ENCODE measurements at regions of chr4 and their contacts with region 1.

Region 1: DNA sequence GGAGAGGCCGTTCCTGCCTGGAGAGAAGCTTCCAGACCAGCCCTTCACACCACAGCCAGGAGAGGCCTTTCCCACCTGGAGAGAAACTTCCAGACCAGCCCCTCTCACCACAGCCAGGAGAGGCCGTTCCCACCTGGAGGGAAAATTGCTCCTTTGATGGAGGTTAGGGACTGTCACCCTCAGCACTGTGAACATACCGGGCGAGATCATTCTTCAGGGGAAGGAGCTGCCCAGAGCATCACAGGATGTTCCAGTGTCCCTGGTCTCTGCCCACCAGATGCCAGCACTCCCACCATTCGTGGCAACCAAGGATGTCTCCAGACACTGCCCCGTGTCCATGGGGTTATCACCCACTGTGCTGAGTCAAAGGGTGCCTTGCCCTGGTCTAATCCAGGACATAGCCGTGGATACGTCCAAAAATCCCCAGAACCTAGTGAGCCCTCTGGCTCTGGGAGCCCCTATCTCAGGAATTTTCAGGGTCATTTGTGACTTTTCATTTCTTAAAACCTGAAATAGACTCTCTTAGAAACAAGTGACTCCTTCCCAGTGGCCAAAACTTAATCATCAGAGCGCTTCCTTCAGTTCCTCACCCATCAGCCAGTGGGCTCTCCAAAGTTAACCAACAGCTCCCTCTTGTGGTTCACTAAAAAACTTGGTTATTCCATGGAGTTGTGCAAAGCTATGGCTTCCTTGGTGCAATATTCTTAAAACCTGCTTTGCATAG is 80.2 kb downstream of the CRMP1 start:
- DNase-seq: peak; percentile 74
- ATAC-seq: peak; percentile 89
- H3K4me3 ChIP-seq: no peak overlapping the region
- H3K27ac ChIP-seq: no peak overlapping the region
- H3K4me1 ChIP-seq: no peaks in the 10 kb centered on the region
- H3K27me3 ChIP-seq: no peaks in the 10 kb centered on the region
- CTCF ChIP-seq: peak; percentile 71

Region 2: GRCh38 chr4:4488405-4489404 is 1324.0 kb before region 1 on chr4:
- CTCF ChIA-PET with region 1: no interaction called
- POLR2A ChIA-PET with region 1: no interaction called
- intact Hi-C with region 1: loop called (anchors 5 kb)
- DNase-seq: peak; percentile 76
- ATAC-seq: peak; percentile 93
- H3K4me3 ChIP-seq: no peak overlapping the region
- H3K27ac ChIP-seq: no peak overlapping the region
- H3K4me1 ChIP-seq: no peaks in the 10 kb centered on the region
- H3K27me3 ChIP-seq: no peaks in the 10 kb centered on the region
- CTCF ChIP-seq: peak; percentile 84

Region 3: DNA sequence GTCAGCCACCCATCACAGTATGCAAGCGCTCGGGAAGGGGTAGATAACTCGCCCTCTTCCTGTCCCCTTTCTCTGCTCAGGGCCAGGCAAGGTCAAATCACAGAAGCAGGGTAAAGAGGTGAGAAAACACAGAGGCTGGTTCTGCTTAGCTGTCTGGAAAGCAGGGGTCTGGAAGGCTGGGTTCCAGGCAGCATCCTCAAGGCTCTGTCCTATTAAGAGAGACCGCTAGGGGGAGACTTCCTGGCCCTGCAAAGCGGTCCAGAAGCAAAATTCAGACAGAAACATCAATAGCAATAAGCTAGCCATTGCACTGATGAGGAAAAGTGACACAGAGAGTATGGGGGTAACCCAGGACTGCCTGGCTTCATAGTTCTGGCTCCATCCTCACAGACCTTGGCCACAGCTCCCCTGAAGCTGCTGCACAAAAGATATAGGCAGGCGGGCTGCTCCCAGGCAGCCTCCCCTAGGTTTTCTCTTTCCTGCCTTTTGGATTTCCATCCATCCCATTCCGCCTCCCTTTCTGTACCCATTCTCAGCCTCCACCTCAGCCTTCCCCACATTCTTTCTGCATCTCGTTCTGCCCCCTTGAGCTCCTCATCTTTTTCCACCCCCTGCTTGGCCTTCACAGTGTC is 412.8 kb before region 1 on chr4:
- CTCF ChIA-PET with region 1: no interaction called
- POLR2A ChIA-PET with region 1: no interaction called
- intact Hi-C with region 1: loop called (anchors 2 kb)
- DNase-seq: peak; percentile 50
- ATAC-seq: peak; percentile 48; the same call in 1 of the 2 replicates
- H3K4me3 ChIP-seq: no peak overlapping the region
- H3K27ac ChIP-seq: no peak overlapping the region
- H3K4me1 ChIP-seq: no peaks in the 10 kb centered on the region
- H3K27me3 ChIP-seq: no peaks in the 10 kb centered on the region
- CTCF ChIP-seq: peak; percentile 71

Measured in PC-3 (cell line).